ENCODE measurements at regions of chr10 and their contacts with region 1.

Region 1: GRCh38 chr10:6401562-6402348 is 178.3 kb downstream of the PRKCQ start:
- H3K4me3 ChIP-seq: peak overlapping the region; percentile 29; the same call in 1 of the 2 replicates
- H3K27ac ChIP-seq: no peak overlapping the region
- H3K4me1 ChIP-seq: no peaks in the 10 kb centered on the region
- CTCF ChIP-seq: peak; percentile 74

Region 2: GRCh38 chr10:6014241-6014761 is 387.5 kb before region 1 on chr10:
- CTCF ChIA-PET with region 1: interaction called, 35 read pairs
- POLR2A ChIA-PET with region 1: no interaction called
- H3K4me3 ChIP-seq: no peak overlapping the region
- H3K27ac ChIP-seq: no peak overlapping the region
- H3K4me1 ChIP-seq: no peaks in the 10 kb centered on the region
- CTCF ChIP-seq: no peak

Region 3: GRCh38 chr10:6088721-6089390 is 312.9 kb before region 1 on chr10 and contains the start of gene RBM17:
- CTCF ChIA-PET with region 1: interaction called, 30 read pairs
- POLR2A ChIA-PET with region 1: no interaction called
- H3K4me3 ChIP-seq: peak within 1 kb of the TSS; percentile 78
- H3K27ac ChIP-seq: peak within 1 kb of the TSS; percentile 91; the same call in 1 of the 2 replicates
- H3K4me1 ChIP-seq: peaks cover 8% of the 10 kb centered on the region; the same call in 1 of the 2 replicates
- CTCF ChIP-seq: peak; percentile 99

Region 4: GRCh38 chr10:6108603-6109443 is 292.9 kb before region 1 on chr10:
- CTCF ChIA-PET with region 1: interaction called, 48 read pairs
- POLR2A ChIA-PET with region 1: interaction called, 4 read pairs
- H3K4me3 ChIP-seq: no peak overlapping the region
- H3K27ac ChIP-seq: no peak overlapping the region
- H3K4me1 ChIP-seq: no peaks in the 10 kb centered on the region
- CTCF ChIP-seq: no peak

Region 5: GRCh38 chr10:6136215-6137201 is 265.2 kb before region 1 on chr10:
- CTCF ChIA-PET with region 1: interaction called, 18 read pairs
- POLR2A ChIA-PET with region 1: no interaction called
- H3K4me3 ChIP-seq: no peak overlapping the region
- H3K27ac ChIP-seq: no peak overlapping the region
- H3K4me1 ChIP-seq: no peaks in the 10 kb centered on the region
- CTCF ChIP-seq: no peak

Region 6: GRCh38 chr10:6202684-6203330 is 198.9 kb before region 1 on chr10 and contains the start of gene PFKFB3:
- CTCF ChIA-PET with region 1: interaction called, 84 read pairs
- POLR2A ChIA-PET with region 1: interaction called, 92 read pairs
- H3K4me3 ChIP-seq: peak within 1 kb of the TSS; percentile 62
- H3K27ac ChIP-seq: peak within 1 kb of the TSS; percentile 66; the same call in 1 of the 2 replicates
- H3K4me1 ChIP-seq: peaks cover 16% of the 10 kb centered on the region
- CTCF ChIP-seq: peak; percentile 95

Region 7: DNA sequence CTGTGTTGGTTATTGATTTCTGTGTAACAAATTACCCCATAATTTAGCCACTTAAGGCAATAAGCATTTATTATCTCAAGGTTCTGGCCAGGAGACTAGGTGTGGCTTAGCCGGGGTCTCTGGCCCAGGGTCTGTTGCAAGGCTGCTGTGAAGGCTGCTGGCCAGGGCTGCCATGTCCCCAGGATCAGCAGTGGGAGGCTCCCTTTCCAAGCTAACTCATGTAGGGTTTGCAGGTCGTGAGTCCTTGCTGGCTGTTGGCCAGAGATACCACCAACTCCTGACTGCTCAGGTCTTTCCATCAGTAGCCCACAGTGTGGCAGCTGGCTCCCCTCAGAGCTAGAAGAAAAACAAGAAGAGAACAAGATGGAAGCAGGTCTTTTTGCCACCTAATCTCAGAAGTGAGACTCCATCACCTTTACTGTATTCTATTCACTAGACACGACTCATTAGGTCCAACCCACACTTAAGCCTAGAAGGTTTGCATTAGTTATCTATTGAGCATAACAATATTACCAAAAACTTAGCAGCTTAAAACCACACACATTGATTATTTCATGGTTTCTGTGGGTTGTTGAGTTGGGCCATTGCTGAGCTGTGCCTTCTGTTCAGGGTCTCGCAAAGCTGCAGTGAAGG is 13.4 kb before region 1 on chr10:
- CTCF ChIA-PET with region 1: interaction called, 21 read pairs
- POLR2A ChIA-PET with region 1: no interaction called
- H3K4me3 ChIP-seq: no peak overlapping the region
- H3K27ac ChIP-seq: no peak overlapping the region
- H3K4me1 ChIP-seq: no peaks in the 10 kb centered on the region
- CTCF ChIP-seq: no peak

Region 8: GRCh38 chr10:6427357-6427959 is 25.7 kb after region 1 on chr10:
- CTCF ChIA-PET with region 1: no interaction called
- POLR2A ChIA-PET with region 1: no interaction called
- H3K4me3 ChIP-seq: no peak overlapping the region
- H3K27ac ChIP-seq: no peak overlapping the region; the same call in 1 of the 2 replicates
- H3K4me1 ChIP-seq: peaks cover 9% of the 10 kb centered on the region
- CTCF ChIP-seq: no peak

Region 9: DNA sequence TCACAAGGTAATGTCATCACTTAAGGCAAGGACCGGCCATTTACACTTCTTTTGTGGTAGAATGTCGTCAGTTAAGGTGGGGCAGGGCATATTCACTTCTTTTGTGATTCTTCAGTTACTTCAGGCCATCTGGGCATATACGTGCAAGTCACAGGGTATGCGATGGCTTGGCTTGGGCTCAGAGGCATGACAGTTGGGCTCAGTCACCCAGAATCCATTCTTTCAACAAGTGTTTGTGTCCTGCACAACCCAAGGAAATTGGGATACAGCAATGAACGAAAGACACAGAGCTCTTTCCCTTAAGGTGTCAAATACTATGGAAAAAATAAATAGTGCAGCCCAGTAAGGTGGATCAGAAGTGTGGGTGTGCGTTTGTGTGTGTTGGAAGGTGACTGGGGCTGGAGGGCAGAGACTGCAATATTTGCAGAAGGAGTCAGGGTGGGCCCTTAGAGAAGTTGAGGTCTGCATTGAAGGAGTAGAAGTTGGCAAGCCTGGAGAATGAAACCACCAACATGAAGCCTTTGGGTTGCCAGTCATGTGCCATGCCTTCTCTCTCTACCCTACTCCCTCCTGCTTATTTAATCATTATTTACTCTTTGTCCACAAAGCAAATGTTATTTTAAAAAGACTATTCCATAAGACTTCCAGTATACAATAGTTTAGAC is 401.1 kb after region 1 on chr10:
- CTCF ChIA-PET with region 1: no interaction called
- POLR2A ChIA-PET with region 1: no interaction called
- H3K4me3 ChIP-seq: no peak overlapping the region
- H3K27ac ChIP-seq: no peak overlapping the region
- H3K4me1 ChIP-seq: no peaks in the 10 kb centered on the region
- CTCF ChIP-seq: no peak